ENCODE measurements at regions of chr19 and their contacts with region 1.

Region 1: DNA sequence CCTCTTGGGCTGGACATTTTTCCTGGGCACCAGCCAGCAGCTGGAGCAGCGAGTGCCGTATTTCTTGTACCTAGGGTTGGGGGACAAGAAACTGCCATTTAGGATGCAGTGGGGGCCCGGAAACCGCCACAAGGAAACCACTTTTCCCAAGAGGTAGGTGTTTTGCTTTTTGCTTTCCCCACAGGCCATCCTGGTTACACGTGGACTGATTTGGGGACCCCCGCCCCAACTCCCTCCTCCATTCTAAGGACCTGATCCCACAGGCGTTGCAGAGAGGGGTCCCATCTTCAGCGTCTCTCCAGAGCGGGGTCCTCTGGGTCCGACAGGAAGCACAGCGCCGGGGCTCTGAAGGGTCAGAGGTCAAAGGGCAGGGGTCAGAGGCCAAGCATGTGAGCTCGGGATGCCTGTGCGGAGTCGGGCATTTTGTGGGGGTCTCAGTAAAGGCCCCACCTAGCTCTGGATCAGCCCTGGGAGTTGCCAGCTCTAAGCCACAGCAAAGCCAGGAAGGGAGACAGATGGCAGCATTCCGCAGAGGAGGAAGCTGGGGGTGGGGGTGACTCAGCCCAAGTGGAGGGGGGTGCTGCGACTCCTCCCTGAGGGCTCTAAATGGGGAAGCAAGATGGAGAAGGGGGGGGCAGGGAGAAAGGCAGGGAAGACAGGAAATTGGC is 4.3 kb downstream of the ZGLP1 start:
- DNase-seq: no peak
- H3K4me3 ChIP-seq: no peak overlapping the region
- H3K27ac ChIP-seq: peak overlapping the region; percentile 47
- H3K27me3 ChIP-seq: no peaks in the 10 kb centered on the region
- CTCF ChIP-seq: 0 out of 2 replicates have a peak, but pooled peaks have one; percentile 12

Region 2: DNA sequence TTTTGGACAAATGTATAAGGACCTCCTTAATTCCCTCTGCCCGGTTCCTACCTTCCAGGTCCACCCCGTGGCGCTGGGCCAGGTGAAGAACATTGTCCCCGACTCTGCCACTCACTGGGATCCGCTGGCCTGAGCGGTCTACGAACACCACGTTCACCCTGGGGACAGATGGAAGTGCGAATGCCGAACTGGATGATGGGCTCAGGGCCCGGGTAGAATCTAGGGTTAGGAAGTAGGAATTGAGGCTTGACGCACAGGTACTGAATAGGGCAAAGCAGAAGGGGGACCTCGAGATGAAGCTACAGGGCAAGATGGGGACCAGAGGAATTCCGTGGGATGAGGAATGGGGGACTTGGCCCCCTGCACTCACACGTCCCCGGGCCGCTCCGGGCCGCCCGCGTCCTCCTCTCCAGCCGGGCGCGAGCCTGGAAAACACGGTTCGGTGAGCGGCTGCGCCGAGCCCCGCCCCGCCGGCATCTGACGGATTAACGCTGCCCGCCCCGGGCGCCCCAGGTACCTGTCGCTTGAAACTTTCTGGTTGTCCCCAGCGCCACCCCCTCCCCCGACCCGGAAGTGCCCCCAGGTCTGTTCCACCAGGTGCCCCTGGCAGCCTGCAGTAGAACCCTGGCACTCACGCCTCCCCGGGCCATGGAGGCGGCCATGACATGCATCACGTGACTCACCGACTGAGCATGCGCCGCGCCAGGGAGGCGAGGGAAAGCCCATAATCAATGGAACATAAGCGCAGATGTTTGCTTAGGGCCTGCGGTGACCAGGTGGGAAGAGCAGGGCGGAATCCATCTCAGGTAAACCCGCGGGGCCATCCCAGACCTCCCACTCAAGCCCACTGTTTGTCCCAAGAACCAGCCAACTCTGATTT is 10.3 kb after region 1 on chr19 and contains the start of gene FDX2:
- CTCF ChIA-PET with region 1: interaction called, 7 read pairs
- POLR2A ChIA-PET with region 1: interaction called, 12 read pairs
- DNase-seq: no peak
- H3K4me3 ChIP-seq: peak within 1 kb of the TSS; percentile 89
- H3K27ac ChIP-seq: peak within 1 kb of the TSS; percentile 52
- H3K27me3 ChIP-seq: no peaks in the 10 kb centered on the region
- CTCF ChIP-seq: no peak
- polyA plus RNA-seq, gene FDX2: 20.8 and 30.0 TPM in 2 replicates

Measured in AG04450 (cell line).